Caco-2 (cell line): ENCODE measurements at regions of chr6 and their contacts with region 1.

Region 1: DNA sequence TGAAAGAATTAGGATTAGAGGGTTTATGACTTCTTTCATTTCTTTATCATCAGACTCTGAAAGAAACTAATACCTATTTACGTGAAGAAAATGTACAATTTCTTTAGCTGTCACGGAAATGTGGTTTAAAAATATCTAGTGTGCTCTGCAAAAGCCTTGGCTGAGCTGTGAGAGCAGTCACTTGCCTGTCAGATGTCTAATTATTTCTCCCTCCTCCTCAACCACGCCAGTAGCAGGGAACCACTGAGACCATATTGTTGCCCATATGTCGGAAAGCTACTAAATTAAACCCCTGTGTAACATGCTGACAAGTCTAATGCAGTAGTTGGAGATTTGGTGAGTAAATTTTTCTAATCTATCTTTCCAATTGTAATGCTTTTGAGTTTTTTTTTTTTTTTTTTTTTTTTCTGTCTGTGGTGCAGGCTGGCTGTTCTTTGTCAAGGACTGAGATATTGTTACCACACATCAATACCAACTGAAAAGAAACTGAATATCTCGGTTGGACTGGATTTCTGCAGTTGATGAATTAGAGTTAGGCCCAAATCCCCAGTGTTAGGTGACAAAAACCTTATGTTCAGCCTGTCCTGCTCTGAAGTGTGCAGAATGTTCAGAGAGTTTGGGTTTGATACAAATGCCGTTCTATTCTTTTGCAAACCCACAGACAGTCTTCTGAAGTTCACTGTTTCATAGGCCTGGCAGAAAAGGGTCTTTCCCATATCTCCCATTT is 302.9 kb upstream of the SYNCRIP start:
- DNase-seq: no peak
- H3K4me3 ChIP-seq: no peak overlapping the region
- H3K4me3 Mint-ChIP-seq: no peak overlapping the region
- H3K27ac Mint-ChIP-seq: no peak overlapping the region
- H3K4me1 ChIP-seq: 0 out of 2 replicates have a peak, but pooled peaks cover 4% of the 10 kb centered on the region
- H3K4me1 Mint-ChIP-seq: no peaks in the 10 kb centered on the region
- H3K27me3 ChIP-seq: no peaks in the 10 kb centered on the region
- H3K27me3 Mint-ChIP-seq: no peaks in the 10 kb centered on the region
- CTCF ChIP-seq: no peak

Region 2: DNA sequence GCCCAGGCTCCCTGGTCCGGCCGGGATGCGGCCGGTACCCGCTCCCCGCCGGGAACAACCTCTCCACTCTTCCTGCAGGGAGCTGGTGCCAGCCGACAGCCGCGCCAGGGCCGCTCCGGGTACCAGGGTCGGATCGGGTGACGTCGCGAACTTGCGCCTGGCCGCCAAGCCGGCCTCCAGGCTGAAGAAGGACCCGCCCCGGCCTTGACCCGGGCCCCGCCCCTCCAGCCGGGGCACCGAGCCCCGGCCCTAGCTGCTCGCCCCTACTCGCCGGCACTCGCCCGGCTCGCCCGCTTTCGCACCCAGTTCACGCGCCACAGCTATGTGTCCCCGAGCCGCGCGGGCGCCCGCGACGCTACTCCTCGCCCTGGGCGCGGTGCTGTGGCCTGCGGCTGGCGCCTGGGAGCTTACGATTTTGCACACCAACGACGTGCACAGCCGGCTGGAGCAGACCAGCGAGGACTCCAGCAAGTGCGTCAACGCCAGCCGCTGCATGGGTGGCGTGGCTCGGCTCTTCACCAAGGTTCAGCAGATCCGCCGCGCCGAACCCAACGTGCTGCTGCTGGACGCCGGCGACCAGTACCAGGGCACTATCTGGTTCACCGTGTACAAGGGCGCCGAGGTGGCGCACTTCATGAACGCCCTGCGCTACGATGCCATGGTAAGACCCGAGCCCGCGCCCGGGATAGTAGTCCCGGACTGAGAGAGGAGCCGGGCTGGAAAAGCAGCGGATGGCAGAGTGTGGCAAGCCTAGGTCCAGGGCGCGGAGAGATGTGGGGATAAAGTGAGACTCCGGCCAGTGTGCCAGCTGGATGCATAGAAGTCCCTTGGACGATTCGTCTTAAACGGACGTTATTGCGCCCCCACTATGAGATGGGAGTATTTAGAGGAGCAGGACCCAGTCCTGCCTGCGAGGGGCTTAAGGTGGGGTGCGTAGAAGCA is 495.5 kb before region 1 on chr6 and contains the start of gene NT5E:
- CTCF ChIA-PET with region 1: interaction called, 10 read pairs
- POLR2A ChIA-PET with region 1: no interaction called
- intact Hi-C with region 1: no loop called
- DNase-seq: peak; percentile 53 to 71
- H3K4me3 ChIP-seq: peak within 1 kb of the TSS; percentile 61
- H3K4me3 Mint-ChIP-seq: peak within 1 kb of the TSS; percentile 85
- H3K27ac Mint-ChIP-seq: no peak within 1 kb of the TSS
- H3K4me1 ChIP-seq: no peaks in the 10 kb centered on the region
- H3K4me1 Mint-ChIP-seq: peaks cover 17% of the 10 kb centered on the region
- H3K27me3 ChIP-seq: no peaks in the 10 kb centered on the region
- H3K27me3 Mint-ChIP-seq: peaks cover 7% of the 10 kb centered on the region
- CTCF ChIP-seq: peak in 1 of 2 experiments; percentile 1
- total RNA-seq, gene NT5E: 1.0 and 1.5 TPM in 2 replicates

Region 3: GRCh38 chr6:86477500-86478148 is 532.0 kb after region 1 on chr6:
- CTCF ChIA-PET with region 1: no interaction called
- POLR2A ChIA-PET with region 1: no interaction called
- intact Hi-C with region 1: no loop called
- DNase-seq: no peak
- H3K4me3 ChIP-seq: no peak overlapping the region
- H3K4me3 Mint-ChIP-seq: no peak overlapping the region
- H3K27ac Mint-ChIP-seq: no peak overlapping the region
- H3K4me1 ChIP-seq: peaks cover 5% of the 10 kb centered on the region
- H3K4me1 Mint-ChIP-seq: peaks cover 7% of the 10 kb centered on the region
- H3K27me3 ChIP-seq: no peaks in the 10 kb centered on the region
- H3K27me3 Mint-ChIP-seq: no peaks in the 10 kb centered on the region
- CTCF ChIP-seq: no peak